AG04449 (cell line): ENCODE measurements at regions of chr5 and their contacts with region 1.

Region 1: GRCh38 chr5:132272311-132273210 is 15.1 kb downstream of the PDLIM4 start:
- DNase-seq: no peak
- H3K4me3 ChIP-seq: no peak overlapping the region
- CTCF ChIP-seq: peak; percentile 65

Region 2: GRCh38 chr5:131968396-131968954 is 304.1 kb before region 1 on chr5:
- CTCF ChIA-PET with region 1: no interaction called
- POLR2A ChIA-PET with region 1: no interaction called
- DNase-seq: no peak
- H3K4me3 ChIP-seq: no peak overlapping the region
- CTCF ChIP-seq: no peak

Region 3: DNA sequence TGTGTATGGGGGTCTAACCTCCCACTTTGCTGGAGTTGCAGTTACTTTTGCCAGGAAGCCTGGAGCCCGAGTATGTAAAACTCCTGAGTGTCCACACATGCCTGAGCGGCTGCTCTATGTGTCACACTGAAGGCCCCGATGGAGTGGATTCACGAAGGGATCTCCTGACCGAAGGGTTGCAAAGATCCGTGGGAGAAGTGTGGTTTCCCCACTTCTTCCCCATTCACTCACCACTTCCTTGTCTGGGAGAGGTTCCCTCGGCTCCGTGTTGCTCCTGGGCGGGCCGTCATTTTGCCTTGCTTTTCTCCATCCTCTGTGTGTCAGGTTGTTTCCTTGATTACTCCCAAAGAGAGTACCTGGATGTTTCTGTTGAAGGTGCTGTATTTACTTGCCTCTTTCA is 228.4 kb before region 1 on chr5:
- CTCF ChIA-PET with region 1: no interaction called
- POLR2A ChIA-PET with region 1: no interaction called
- DNase-seq: no peak
- H3K4me3 ChIP-seq: no peak overlapping the region
- CTCF ChIP-seq: no peak

Region 4: DNA sequence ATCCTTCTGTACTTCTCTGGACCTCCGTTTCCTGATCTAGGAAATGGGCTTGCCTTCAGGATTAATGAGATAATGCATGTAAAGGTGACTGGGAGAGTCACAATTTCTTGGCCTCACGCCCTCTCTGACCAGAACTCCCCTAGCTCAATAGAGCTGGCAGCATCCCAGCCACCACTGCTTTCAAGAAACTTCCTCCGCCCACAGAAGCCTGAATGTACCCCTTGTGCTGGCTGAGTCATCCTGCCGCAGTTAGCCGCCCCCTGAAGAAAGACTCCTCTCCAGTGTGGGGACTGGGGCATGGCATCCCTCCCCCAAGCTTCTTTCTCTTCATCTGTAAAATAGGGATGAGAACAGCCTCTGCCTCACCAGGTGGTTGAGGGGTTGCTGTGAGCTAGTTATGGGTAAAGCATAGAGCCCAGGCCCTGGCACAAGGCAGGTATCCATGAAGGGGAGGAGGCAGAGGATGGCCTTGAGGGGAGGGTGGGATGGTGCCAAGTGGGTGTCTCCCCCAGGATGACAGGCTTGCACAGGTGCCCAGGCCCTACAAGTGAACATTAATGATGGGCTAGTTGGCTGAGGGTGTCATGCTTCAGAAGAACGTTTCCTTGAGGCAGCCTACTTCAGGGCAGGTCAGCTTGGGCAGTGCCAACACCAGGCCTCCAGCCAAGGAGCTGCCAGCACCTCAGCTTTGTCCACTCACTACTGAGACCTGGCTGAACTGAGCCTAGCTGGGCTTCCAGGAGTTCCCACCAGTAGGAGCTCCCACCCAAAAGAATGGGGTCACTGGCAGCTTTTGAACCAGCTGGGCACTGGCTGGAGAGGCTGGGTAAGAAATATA is 11.6 kb before region 1 on chr5:
- CTCF ChIA-PET with region 1: interaction called, 36 read pairs
- POLR2A ChIA-PET with region 1: no interaction called
- DNase-seq: peak; percentile 51
- H3K4me3 ChIP-seq: no peak overlapping the region; the same call in 1 of the 2 replicates
- CTCF ChIP-seq: no peak

Region 5: DNA sequence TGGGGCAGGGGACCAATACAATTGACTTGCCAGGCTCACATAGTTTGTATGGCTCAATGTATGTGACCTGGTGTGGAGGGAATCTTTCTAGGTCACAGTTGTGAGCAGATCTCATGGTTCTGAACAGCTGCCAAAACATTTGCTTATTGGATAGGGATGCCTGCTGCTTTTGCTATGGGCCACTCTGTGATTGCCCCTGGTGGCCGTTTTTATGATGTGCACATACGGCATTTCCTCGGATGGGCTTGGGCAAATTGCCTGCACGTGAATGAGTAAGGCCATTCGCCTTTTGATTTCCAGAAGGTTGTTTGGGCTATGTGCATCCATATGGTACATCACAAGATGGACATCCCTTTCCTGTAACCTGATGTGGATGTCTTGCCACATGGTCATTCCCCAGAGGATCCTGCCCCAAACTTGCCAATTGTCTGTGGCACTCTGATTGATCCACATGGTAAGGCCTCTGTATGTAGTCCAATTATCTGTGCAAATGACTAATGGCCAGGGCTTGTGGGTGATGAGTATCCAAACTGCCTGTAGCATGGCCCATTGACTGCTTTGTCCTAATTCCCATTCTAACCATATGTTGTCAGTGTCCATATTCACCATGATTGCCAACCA is 11.0 kb after region 1 on chr5:
- CTCF ChIA-PET with region 1: interaction called, 46 read pairs
- POLR2A ChIA-PET with region 1: no interaction called
- DNase-seq: no peak
- H3K4me3 ChIP-seq: no peak overlapping the region
- CTCF ChIP-seq: peak; percentile 43

Region 6: DNA sequence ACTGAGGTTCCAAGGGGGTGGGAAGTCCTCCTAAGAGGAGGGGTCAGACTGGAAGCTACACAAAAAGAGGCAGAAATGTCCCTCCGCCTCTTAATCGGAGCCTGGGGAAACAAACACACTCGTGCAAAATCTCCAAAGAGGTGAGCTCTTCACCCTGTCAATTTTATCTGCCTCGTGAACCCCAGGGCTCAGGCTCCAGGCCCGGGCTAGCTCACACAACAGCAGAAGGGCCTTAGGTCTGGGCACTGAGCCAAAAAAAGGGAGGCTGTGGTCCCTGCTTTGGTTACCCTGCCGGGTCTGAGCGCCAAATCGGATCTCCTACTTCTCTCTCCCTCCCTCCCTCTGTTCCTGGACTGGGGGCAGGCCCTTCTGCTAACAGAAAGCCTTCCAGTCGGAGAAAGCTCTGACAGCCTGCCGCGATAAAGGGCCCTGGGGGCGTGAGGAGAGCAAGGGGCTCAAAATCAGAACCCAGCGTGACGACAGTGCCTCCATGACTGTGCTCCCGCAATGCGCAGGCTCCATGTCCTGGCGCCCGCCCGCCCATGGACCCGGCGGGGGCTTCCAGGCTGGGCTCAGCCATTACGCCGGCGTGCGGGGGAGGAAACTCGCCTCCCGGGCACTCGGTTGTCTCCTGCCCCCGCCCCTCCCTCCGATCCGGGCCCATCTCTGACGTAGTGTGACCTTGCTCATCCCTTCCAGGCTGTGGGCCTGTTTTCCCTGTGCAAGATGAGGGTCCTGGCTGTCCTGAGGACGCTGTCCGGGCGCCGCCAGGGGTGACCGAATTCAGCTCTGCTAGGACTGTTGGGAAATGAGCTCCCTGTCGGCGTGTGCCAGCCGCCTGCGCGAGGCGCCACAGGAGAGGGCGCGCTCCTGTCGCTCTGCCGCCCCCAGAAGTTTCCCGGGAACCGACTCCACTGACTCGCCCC is 20.8 kb after region 1 on chr5:
- CTCF ChIA-PET with region 1: interaction called, 46 read pairs
- POLR2A ChIA-PET with region 1: interaction called, 4 read pairs
- DNase-seq: peak; percentile 36
- H3K4me3 ChIP-seq: peak overlapping the region; percentile 72
- CTCF ChIP-seq: peak; percentile 22